ENCODE measurements at regions of chr17 and their contacts with region 1.

Region 1: DNA sequence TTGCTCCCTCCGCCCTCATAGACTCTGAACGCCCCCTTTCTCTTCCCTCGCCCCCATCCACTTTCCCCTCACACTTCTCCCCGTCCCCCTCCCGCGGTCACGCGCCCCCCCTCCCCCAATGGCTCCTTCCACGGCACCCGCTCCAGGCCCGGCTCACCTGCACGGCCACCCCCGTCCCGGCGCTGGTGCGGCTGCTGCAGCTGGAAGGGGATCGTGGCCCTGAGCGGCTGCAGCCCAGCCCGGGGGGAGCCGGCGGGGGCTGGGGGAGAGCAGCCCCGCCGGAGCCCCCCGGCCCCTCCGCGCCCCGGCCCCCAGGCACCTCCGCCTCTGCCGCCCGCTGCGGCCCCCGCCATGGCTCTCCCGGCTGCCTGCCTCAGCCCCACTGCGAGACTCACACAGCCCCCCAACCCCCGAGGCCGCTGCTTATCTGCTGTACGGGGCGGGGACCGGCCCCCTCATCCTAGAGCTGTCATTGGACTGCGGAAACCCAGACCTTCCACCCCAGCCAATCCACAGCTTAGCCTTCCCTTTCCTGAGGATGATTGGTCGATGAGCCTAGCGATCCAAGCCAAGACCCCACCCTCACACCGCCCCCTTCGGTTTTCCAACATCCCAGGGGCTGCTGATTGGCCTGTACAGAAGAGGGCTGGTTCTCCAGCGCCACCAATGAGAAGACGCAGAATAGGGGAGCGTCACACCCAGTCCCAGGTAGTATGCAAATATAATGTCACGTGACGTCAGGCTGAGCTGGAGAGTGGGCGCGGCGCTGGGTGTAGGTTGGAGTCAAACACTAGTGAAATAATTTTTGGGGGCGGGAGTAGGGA is at the start of gene FAM117A:
- DNase-seq: peak; percentile 100
- H3K4me3 ChIP-seq: peak within 1 kb of the TSS; percentile 57 to 67
- H3K27ac ChIP-seq: peak within 1 kb of the TSS in 1 of 2 experiments; percentile 30; a peak in 2 of 4 replicates
- H3K4me1 ChIP-seq: peaks cover 0 to 13% of the 10 kb centered on the region in 2 experiments; a peak in 2 of 4 replicates
- H3K27me3 ChIP-seq: no peaks in the 10 kb centered on the region
- CTCF ChIP-seq: no peak
- EP300 ChIP-seq: no peak
- RAD21 ChIP-seq: no peak
- polyA plus RNA-seq, gene FAM117A: 7.8 and 9.0 TPM in 2 replicates

Region 2: DNA sequence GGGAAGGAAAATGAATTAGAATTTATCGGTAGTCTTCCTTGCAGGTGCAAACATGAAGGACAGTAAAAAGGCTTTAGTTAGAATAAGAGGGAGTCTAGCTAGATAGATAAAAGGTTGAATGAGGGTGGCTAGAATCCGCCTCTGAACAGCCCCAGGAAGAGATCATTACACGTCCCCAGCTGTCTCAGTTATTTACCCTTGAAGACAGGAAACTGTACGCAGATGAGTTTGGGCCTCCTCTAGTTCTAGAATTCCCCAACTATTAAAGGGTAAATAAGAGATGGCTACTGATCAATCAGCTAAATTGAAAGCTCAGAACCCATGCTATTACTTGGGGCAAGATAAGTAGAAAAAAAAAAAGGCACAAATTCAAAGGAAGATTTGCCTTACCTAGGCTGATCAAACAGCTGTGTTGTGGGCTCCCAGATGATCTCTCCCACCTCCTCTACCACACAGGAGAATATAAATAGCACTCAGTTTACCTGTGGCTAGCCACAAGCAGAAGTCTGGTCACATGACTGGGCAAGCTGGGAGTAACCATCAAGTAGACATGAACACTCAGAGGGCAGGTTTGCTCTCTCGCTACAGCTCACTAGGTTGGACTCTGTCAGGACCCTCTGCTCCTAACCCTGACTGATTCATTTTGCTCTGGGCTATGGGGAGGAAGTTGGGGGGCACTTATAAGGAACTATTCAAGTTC is 17.0 kb before region 1 on chr17:
- CTCF ChIA-PET with region 1: interaction called, 10 read pairs
- POLR2A ChIA-PET with region 1: no interaction called
- DNase-seq: no peak
- H3K4me3 ChIP-seq: no peak overlapping the region
- H3K27ac ChIP-seq: no peak overlapping the region
- H3K4me1 ChIP-seq: peaks cover 0 to 4% of the 10 kb centered on the region in 2 experiments; a peak in 1 of 4 replicates
- H3K27me3 ChIP-seq: no peaks in the 10 kb centered on the region
- CTCF ChIP-seq: no peak
- EP300 ChIP-seq: no peak
- RAD21 ChIP-seq: no peak

Region 3: DNA sequence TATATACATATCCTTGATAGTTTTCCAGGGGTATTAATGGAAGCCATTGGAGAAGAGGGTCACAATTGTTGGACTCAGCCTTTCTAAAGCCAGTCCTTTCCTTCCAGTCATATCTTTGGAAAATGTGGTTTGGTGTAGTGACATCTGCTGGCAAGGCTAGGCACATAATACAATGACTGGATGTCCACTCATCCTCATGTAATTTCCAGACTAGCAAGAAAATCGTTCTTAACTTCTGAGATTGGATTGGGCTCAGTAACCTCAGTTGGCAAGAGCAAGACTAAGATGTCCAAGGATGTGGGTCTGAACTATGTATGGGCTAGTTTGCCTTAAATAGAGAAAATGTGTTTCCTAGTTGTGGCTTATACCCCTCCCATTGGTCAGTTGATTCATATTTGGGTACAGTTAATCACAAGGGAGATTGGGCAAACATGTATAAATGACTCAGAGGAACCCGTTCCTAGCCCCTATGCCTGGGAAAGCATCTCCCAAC is 15.8 kb after region 1 on chr17:
- CTCF ChIA-PET with region 1: interaction called, 4 read pairs
- POLR2A ChIA-PET with region 1: interaction called, 11 read pairs
- DNase-seq: peak; percentile 40
- H3K4me3 ChIP-seq: no peak overlapping the region
- H3K27ac ChIP-seq: 0 out of 4 replicates have a peak overlapping the region, but pooled peaks of 1 of the 2 experiments have one; percentile 3
- H3K4me1 ChIP-seq: no peaks in the 10 kb centered on the region; a peak in 1 of 4 replicates
- H3K27me3 ChIP-seq: peaks cover 8% of the 10 kb centered on the region; the same call in 1 of the 2 replicates
- CTCF ChIP-seq: peak; percentile 74
- EP300 ChIP-seq: no peak
- RAD21 ChIP-seq: peak; percentile 71

Region 4: DNA sequence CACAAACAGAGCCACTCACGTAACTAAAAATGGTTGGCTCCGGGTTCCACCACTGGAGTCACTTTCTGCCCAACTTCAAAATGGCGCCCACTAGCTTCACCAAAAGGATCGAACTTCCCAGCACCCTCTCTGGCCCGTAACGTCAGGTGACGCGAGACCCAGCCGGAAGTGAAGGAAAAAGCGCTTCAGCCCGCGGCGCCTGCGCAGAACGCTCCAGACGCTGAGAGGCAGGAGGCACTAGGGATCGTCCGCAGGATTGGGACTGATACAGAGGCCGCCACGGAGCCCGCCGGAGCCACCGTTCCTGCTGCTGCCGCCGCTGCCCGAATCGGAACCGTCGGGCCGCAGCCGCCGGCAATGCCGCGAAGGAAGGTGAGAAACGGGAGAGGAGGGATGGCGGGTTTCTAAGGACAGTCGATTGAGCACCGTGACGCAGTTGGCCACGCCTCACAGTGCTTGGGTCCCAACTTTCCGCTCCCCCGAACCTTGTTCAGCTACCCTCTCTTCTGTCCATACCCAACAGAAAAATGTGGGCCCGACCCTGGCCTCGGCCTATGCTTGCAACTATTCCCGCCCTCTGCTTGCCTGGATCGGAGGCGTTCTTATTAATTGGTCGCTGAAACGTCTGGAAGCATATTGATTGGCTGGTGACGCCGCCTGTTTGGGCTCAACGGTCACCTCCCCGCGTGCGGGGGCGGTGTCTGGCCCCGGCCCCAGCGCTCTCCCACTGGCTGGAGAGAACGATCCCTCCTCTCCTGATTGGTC is 24.7 kb after region 1 on chr17 and contains the start of gene KAT7:
- CTCF ChIA-PET with region 1: no interaction called
- POLR2A ChIA-PET with region 1: interaction called, 15 read pairs
- DNase-seq: peak; percentile 98
- H3K4me3 ChIP-seq: peak within 1 kb of the TSS; percentile 92 to 99
- H3K27ac ChIP-seq: peak within 1 kb of the TSS; percentile 96 to 97
- H3K4me1 ChIP-seq: peaks cover 13 to 16% of the 10 kb centered on the region in 2 experiments
- H3K27me3 ChIP-seq: no peaks in the 10 kb centered on the region
- CTCF ChIP-seq: no peak
- EP300 ChIP-seq: no peak
- RAD21 ChIP-seq: no peak
- polyA plus RNA-seq, gene KAT7: 18.5 and 20.2 TPM in 2 replicates

Measured in SK-N-SH (cell line).